ENCODE measurements at regions of chr7 and their contacts with region 1.

Region 1: DNA sequence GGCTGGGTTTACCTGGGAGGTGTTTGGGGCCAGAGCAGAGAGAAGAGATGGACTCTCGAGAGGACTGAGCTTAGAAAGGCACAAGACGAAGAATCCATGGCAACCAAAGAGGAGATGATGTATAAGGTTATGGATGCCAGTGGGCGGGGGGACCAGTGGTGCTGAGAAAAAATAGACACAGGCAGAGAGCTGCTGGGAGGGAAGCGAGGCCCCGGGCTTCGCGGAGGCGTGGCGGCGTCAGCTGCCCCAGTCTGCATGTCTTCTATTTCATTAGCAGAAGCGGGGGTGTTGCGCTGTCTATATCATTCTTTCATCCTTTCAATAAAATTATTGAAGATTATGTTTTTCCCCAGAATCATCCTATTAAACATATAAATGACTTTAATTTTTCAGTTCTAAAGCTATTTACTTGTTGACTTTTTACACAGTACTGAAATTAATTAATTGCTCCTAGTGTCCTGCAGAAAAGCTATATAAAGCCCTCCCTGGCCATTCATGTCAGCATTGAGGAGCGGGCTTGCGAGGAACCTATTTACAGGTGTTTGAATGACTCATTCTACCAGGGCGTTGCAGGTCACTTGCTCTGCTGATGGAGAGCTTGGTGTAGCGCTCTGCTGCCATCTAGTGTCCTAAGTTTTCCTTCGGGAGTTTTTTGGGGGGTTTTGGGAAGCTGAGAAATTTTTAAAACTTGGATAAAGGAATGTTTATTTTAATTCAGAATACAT is 42.9 kb upstream of the BHLHA15 start:
- DNase-seq: peak; percentile 71 to 82
- ATAC-seq: peak; percentile 68 to 75; a peak in 5 of 6 replicates
- H3K4me3 ChIP-seq: no peak overlapping the region
- H3K27ac ChIP-seq: no peak overlapping the region
- H3K4me1 ChIP-seq: peaks cover 3% of the 10 kb centered on the region; the same call in 1 of the 3 replicates
- CTCF ChIP-seq: peak; percentile 95
- EP300 ChIP-seq: no peak
- POLR2A ChIP-seq: no peak
- RAD21 ChIP-seq: peak; percentile 91 to 94

Region 2: DNA sequence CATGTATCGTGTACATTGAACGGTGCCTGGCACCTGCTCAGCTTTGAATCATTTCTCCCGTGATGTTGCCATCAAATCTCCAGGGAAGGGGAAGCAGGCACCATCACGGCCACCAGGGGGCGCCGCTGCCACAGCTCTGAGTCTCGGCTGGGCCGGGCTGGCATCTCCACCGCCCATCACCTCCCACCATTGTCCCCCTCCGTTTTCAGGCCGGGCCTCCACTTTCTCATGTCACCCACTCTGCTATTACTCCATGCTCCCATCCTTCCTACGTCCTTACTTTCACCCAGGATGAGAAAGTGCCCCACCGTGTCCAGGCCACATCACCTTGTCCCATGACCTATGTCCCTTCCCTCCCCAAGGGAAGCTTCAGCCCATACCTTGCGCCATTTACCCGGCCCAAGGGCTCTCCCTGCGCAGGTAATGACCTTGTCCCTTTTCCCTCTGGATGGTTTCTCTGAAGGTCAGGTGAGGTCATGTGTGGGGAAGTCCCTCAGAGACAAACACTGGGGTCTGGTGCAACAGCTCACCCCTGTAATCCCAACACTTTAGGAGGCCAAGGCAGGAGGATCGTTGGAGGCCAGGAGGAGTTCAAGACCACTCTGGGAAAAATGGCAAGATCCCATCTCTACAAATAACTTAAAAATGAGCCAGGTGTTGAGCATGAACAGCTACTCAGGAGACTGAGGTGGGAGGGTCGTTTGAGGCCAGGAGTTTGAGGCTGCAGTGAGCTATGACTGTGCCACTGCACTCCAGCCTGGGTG is 146.6 kb before region 1 on chr7:
- CTCF ChIA-PET with region 1: interaction called, 493 read pairs
- POLR2A ChIA-PET with region 1: interaction called, 3 read pairs
- DNase-seq: peak; percentile 70 to 80
- ATAC-seq: peak; percentile 93 to 96
- H3K4me3 ChIP-seq: no peak overlapping the region
- H3K27ac ChIP-seq: no peak overlapping the region
- H3K4me1 ChIP-seq: no peaks in the 10 kb centered on the region
- CTCF ChIP-seq: peak; percentile 94
- EP300 ChIP-seq: no peak
- POLR2A ChIP-seq: no peak
- RAD21 ChIP-seq: peak; percentile 94

Region 3: GRCh38 chr7:98097042-98097645 is 71.2 kb before region 1 on chr7:
- CTCF ChIA-PET with region 1: interaction called, 12 read pairs
- POLR2A ChIA-PET with region 1: no interaction called
- DNase-seq: no peak
- ATAC-seq: no peak
- H3K4me3 ChIP-seq: no peak overlapping the region
- H3K27ac ChIP-seq: no peak overlapping the region
- H3K4me1 ChIP-seq: no peaks in the 10 kb centered on the region
- CTCF ChIP-seq: no peak
- EP300 ChIP-seq: no peak
- POLR2A ChIP-seq: no peak
- RAD21 ChIP-seq: no peak

Region 4: DNA sequence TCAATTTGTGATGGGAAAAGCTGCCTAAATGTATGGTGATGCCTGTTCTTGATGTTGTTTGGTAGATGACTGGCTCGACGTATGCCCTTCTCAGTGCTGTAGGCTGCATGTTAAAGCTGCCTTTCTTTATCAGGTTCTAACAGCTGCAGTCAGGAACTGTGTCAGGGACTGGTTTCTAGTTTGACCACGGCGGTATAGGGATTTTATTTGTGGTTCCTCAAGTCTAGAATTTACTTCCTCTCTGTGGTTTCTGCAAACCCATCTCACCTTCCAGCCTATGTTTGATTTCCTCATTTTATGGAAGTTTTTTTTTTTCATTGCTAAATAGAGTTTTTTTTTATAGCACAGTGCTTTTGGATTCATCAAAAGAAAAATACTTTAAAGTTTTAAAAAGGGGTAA is 35.2 kb before region 1 on chr7:
- CTCF ChIA-PET with region 1: interaction called, 15 read pairs
- POLR2A ChIA-PET with region 1: no interaction called
- DNase-seq: no peak
- ATAC-seq: no peak
- H3K4me3 ChIP-seq: no peak overlapping the region
- H3K27ac ChIP-seq: peak overlapping the region; percentile 55 to 84
- H3K4me1 ChIP-seq: peaks cover 60% of the 10 kb centered on the region
- CTCF ChIP-seq: no peak
- EP300 ChIP-seq: no peak
- POLR2A ChIP-seq: no peak
- RAD21 ChIP-seq: no peak

Region 5: GRCh38 chr7:98156700-98157099 is 11.6 kb before region 1 on chr7:
- CTCF ChIA-PET with region 1: interaction called, 12 read pairs
- POLR2A ChIA-PET with region 1: no interaction called
- DNase-seq: no peak
- ATAC-seq: no peak
- H3K4me3 ChIP-seq: no peak overlapping the region
- H3K27ac ChIP-seq: no peak overlapping the region
- H3K4me1 ChIP-seq: no peaks in the 10 kb centered on the region
- CTCF ChIP-seq: no peak
- EP300 ChIP-seq: no peak
- POLR2A ChIP-seq: no peak
- RAD21 ChIP-seq: no peak

Region 6: DNA sequence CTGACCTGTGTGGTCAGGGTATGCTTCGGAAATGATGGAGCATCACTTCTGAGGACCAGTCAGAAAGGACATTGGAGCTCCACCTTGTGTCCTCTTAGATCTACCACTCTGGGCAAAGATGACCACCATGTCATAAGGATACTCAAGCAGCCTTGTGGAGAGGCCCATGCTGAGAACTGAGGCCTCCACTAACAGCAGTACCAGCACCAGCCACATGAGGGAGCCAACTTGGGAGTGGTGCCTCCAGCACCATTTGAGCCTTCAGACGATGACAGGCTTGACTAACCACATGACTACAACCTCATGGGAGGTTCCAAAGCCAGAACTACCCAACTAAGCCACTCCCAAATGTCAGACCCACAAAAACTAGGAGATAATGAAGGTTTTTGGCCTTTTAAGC is 564.7 kb after region 1 on chr7:
- CTCF ChIA-PET with region 1: no interaction called
- POLR2A ChIA-PET with region 1: no interaction called
- DNase-seq: peak; percentile 71 to 81
- ATAC-seq: peak; percentile 57 to 90; a peak in 5 of 6 replicates
- H3K4me3 ChIP-seq: no peak overlapping the region
- H3K27ac ChIP-seq: no peak overlapping the region
- H3K4me1 ChIP-seq: peaks cover 4% of the 10 kb centered on the region; the same call in 1 of the 3 replicates
- CTCF ChIP-seq: peak; percentile 33
- EP300 ChIP-seq: no peak
- POLR2A ChIP-seq: no peak
- RAD21 ChIP-seq: peak; percentile 14 to 43; a peak in 2 of 5 replicates